OCI-LY7 (cell line): ENCODE measurements at regions of chr20 and their contacts with region 1.

Region 1: GRCh38 chr20:38645980-38646858 is 44.6 kb downstream of the ARHGAP40 start:
- DNase-seq: peak; percentile 88
- H3K4me3 ChIP-seq: peak overlapping the region; percentile 56
- H3K27ac ChIP-seq: no peak overlapping the region
- H3K4me1 ChIP-seq: peaks cover 4% of the 10 kb centered on the region
- CTCF ChIP-seq: peak; percentile 90

Region 2: GRCh38 chr20:38730989-38731737 is 84.9 kb after region 1 on chr20:
- CTCF ChIA-PET with region 1: no interaction called
- POLR2A ChIA-PET with region 1: no interaction called
- intact Hi-C with region 1: loop called (anchors 1 kb)
- DNase-seq: peak; percentile 81
- H3K4me3 ChIP-seq: peak overlapping the region; percentile 70
- H3K27ac ChIP-seq: peak overlapping the region; percentile 17
- H3K4me1 ChIP-seq: peaks cover 4% of the 10 kb centered on the region
- CTCF ChIP-seq: peak; percentile 97

Region 3: GRCh38 chr20:38748097-38748860 is 102.1 kb after region 1 on chr20 and contains the start of gene ACTR5:
- CTCF ChIA-PET with region 1: interaction called, 3 read pairs
- POLR2A ChIA-PET with region 1: interaction called, 3 read pairs
- intact Hi-C with region 1: loop called (anchors 1 kb)
- DNase-seq: peak; percentile 94
- H3K4me3 ChIP-seq: peak within 1 kb of the TSS; percentile 94
- H3K27ac ChIP-seq: peak within 1 kb of the TSS; percentile 62
- H3K4me1 ChIP-seq: peaks cover 24% of the 10 kb centered on the region
- CTCF ChIP-seq: no peak
- total RNA-seq, gene ACTR5: 21.1 and 22.2 TPM in 2 replicates

Region 4: GRCh38 chr20:38806855-38807655 is 160.8 kb after region 1 on chr20:
- CTCF ChIA-PET with region 1: no interaction called
- POLR2A ChIA-PET with region 1: no interaction called
- intact Hi-C with region 1: no loop called
- DNase-seq: peak; percentile 54
- H3K4me3 ChIP-seq: peak overlapping the region; percentile 98
- H3K27ac ChIP-seq: peak overlapping the region; percentile 79
- H3K4me1 ChIP-seq: peaks cover 66% of the 10 kb centered on the region
- CTCF ChIP-seq: no peak

Region 5: DNA sequence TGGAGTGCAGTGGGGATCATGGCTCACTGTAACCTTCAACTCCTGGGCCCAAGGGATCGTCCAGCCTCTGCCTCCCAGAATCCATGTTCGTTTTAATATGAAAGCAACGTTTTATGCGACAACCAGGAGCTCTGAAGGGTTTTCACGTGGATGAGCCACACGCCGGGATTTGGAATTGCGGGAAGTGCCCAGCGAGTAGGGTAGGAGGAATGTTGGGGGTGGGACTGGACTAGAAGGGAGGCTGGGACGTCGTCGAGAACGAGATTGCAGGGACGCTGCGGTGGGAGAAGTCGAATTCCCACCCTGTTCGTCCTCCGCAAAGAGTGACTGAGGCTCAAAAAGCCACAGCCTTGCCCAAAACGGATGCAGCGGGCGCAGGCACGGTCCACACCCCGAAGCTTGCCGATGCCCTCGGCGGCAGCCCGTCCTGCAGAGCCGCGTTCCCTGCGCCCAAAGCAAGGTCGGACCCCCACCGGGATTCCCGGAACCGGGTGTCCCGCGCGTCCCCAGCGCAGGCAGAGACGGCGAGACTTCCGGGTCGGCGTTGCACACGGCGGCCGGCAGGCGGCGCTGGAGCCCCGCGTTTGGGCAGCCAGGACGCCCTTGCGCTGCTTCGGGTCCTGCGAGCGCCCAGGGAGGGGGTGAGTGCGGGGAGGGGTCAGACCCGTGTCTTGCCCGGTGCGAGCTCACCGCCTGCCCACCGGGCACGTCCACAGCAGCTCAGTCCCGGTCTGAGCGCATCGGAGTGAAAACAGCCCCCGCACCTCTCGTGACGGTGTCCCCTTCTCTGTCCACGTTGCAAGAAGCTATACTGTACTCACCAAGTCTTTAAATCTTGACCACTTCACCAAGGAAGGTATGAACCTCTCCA is 403.7 kb after region 1 on chr20:
- CTCF ChIA-PET with region 1: no interaction called
- POLR2A ChIA-PET with region 1: no interaction called
- intact Hi-C with region 1: loop called (anchors 1 kb)
- DNase-seq: peak; percentile 82
- H3K4me3 ChIP-seq: peak overlapping the region; percentile 64
- H3K27ac ChIP-seq: no peak overlapping the region
- H3K4me1 ChIP-seq: peaks cover 11% of the 10 kb centered on the region
- CTCF ChIP-seq: peak; percentile 93

Region 6: DNA sequence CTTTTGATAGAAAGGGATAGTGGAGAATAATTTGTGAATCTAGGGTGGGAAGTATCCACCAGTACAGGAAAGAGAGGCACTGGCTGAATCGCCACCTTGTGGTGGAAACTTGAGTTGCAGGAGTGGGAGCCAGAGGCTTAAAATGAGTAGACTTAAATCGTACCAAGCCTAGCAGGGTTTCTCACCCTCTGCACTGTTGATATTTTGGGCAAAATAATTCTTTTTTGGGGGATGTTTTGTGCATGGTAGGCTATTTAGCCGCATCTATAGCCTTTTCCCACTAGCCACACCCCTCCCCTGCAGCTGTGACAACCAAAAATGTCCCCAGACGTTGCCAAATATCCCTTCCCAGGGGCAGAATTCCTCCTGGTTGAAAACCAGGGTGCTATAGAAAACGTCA is 435.0 kb after region 1 on chr20:
- CTCF ChIA-PET with region 1: no interaction called
- POLR2A ChIA-PET with region 1: no interaction called
- intact Hi-C with region 1: loop called (anchors 2 kb)
- DNase-seq: peak; percentile 71
- H3K4me3 ChIP-seq: no peak overlapping the region
- H3K27ac ChIP-seq: no peak overlapping the region
- H3K4me1 ChIP-seq: no peaks in the 10 kb centered on the region
- CTCF ChIP-seq: peak; percentile 90